CD4-positive, alpha-beta memory T cell (primary cell): ENCODE measurements at regions of chr2 and their contacts with region 1.

Region 1: DNA sequence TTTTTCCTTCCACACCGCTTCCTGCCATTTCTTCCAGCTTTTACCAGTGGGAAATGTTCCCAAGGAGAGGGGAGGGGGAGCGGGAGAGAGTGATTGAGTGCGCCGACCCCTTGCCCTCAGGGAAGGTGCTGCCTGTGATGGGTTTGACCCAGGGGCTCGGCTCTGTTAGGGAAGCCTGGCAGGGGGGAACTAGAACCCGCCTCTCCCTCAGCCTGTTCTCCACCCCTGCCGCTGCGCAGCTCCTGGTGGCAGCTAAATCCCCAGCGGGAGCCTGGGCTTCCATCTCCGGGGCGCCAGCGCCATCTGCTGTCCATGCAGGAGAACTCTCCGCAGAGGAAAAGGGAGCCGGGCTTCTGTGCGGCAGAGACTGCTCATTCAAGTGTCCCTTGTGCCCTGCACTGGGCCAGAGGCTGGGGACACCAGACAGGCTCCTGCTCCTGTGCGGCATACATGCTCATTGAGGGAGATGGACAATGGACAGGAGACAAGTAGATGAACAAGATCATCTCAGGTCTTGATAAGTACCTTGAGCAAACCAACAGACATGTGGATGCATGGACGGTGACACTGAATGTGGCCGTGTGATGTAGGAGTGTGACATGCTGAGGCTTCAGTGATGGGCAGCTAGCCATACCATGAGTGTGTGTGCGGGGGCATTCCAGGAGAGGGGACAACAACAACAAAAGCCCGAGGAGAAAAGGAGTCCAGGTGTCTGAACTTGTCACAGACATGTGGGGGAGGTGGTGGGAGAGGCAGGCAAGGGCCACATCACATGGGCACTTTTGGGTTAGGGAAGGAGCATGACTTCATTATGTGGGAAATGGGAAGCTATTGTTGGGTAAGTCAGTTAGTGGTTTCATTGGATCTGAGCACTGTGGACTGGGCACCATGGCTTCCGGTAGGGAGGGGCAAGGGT is 13.3 kb downstream of the CHPF start:
- DNase-seq: peak; percentile 79 to 84 (median 81)
- H3K4me3 ChIP-seq: no peak overlapping the region
- H3K4me3 Mint-ChIP-seq: no peak overlapping the region
- H3K27ac ChIP-seq: no peak overlapping the region
- H3K27ac Mint-ChIP-seq: peak overlapping the region in 1 of 7 donors; percentile 41
- H3K4me1 ChIP-seq: no peaks in the 10 kb centered on the region
- H3K4me1 Mint-ChIP-seq: peaks cover 0 to 7% (median 0%) of the 10 kb centered on the region in 4 donors
- H3K27me3 ChIP-seq: peaks cover 26% of the 10 kb centered on the region
- H3K27me3 Mint-ChIP-seq: peaks cover 53 to 66% of the 10 kb centered on the region in 2 donors

Region 2: DNA sequence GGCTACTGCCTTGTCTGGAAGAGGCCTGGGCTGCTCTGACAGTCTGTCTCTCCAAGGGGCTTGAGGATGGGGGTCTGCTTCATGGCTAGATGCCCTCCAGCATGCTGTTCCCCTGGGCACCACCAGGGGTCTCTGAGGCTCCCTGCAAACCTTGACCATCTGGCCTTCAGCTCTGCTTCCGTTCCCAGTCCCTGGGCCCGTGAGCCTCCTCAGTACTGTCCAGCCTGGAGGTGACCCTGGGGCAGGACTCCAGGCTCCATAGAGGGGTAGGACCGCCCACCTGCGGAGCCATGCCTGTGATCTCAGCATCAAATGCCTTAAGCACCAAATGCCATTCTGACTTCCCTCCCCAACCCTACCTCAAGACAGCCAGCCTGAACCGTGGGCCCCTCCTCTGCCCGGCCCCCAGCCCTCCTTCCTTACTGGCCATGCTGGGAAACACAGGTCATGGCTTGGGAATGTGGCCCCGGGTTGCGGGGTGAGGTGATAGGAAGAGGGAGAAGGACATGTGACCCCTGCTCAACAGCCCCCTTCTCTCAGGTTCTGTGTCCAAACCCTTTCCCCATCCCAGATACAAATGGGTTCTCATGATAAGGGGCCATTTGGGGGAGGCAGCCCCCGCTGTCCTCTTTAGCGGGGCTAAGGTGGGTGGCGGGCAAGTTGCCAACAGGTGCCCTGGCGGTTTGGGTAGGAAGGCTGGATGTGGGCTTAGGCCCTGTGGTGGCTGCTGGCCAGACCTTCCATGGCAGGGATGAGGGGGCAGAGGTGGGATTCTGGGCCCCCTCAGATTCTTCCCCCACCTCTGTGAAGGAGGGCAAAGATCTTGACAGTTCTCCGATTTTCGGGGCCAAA is 70.6 kb before region 1 on chr2:
- CTCF ChIA-PET with region 1: interaction called, 34 read pairs
- POLR2A ChIA-PET with region 1: interaction called, 4 read pairs
- intact Hi-C with region 1: loop called (anchors 1 kb)
- DNase-seq: peak in 1 of 5 donors; percentile 36
- H3K4me3 ChIP-seq: no peak overlapping the region
- H3K4me3 Mint-ChIP-seq: no peak overlapping the region
- H3K27ac ChIP-seq: no peak overlapping the region
- H3K27ac Mint-ChIP-seq: no peak overlapping the region
- H3K4me1 ChIP-seq: no peaks in the 10 kb centered on the region
- H3K4me1 Mint-ChIP-seq: peaks cover 5 to 7% (median 6%) of the 10 kb centered on the region in 4 donors
- H3K27me3 ChIP-seq: no peaks in the 10 kb centered on the region
- H3K27me3 Mint-ChIP-seq: peaks cover 0 to 4% of the 10 kb centered on the region in 2 donors

Region 3: GRCh38 chr2:219498280-219499057 is 31.8 kb before region 1 on chr2 and contains the start of gene GMPPA:
- CTCF ChIA-PET with region 1: interaction called, 160 read pairs
- POLR2A ChIA-PET with region 1: interaction called, 5 read pairs
- intact Hi-C with region 1: loop called (anchors 1 kb)
- DNase-seq: peak; percentile 91 to 97 (median 92)
- H3K4me3 ChIP-seq: peak within 1 kb of the TSS; percentile 62 to 70
- H3K4me3 Mint-ChIP-seq: peak within 1 kb of the TSS; percentile 92 to 100 (median 99)
- H3K27ac ChIP-seq: peak within 1 kb of the TSS; percentile 53
- H3K27ac Mint-ChIP-seq: peak within 1 kb of the TSS; percentile 60 to 99 (median 94)
- H3K4me1 ChIP-seq: peaks cover 37% of the 10 kb centered on the region
- H3K4me1 Mint-ChIP-seq: peaks cover 22 to 39% (median 31%) of the 10 kb centered on the region in 4 donors
- H3K27me3 ChIP-seq: peaks cover 33% of the 10 kb centered on the region
- H3K27me3 Mint-ChIP-seq: peaks cover 31 to 34% of the 10 kb centered on the region in 2 donors
- total RNA-seq, gene GMPPA: 45.2 to 48.3 TPM

Region 4: GRCh38 chr2:219515874-219516629 is 14.3 kb before region 1 on chr2:
- CTCF ChIA-PET with region 1: interaction called, 26 read pairs
- POLR2A ChIA-PET with region 1: interaction called, 3 read pairs
- intact Hi-C with region 1: no loop called
- DNase-seq: no peak
- H3K4me3 ChIP-seq: no peak overlapping the region
- H3K4me3 Mint-ChIP-seq: peak overlapping the region in 1 of 8 donors; percentile 50
- H3K27ac ChIP-seq: no peak overlapping the region
- H3K27ac Mint-ChIP-seq: peak overlapping the region in 1 of 7 donors; percentile 65
- H3K4me1 ChIP-seq: peaks cover 11% of the 10 kb centered on the region
- H3K4me1 Mint-ChIP-seq: peaks cover 4 to 19% (median 9%) of the 10 kb centered on the region in 4 donors
- H3K27me3 ChIP-seq: peaks cover 3% of the 10 kb centered on the region
- H3K27me3 Mint-ChIP-seq: peaks cover 70% of the 10 kb centered on the region in 2 donors